ENCODE measurements at regions of chr17 and their contacts with region 1.

Region 1: GRCh38 chr17:57902800-57903759 is 52.1 kb downstream of the CUEDC1 start:
- DNase-seq: peak; percentile 48 to 95 (median 75)

Region 2: DNA sequence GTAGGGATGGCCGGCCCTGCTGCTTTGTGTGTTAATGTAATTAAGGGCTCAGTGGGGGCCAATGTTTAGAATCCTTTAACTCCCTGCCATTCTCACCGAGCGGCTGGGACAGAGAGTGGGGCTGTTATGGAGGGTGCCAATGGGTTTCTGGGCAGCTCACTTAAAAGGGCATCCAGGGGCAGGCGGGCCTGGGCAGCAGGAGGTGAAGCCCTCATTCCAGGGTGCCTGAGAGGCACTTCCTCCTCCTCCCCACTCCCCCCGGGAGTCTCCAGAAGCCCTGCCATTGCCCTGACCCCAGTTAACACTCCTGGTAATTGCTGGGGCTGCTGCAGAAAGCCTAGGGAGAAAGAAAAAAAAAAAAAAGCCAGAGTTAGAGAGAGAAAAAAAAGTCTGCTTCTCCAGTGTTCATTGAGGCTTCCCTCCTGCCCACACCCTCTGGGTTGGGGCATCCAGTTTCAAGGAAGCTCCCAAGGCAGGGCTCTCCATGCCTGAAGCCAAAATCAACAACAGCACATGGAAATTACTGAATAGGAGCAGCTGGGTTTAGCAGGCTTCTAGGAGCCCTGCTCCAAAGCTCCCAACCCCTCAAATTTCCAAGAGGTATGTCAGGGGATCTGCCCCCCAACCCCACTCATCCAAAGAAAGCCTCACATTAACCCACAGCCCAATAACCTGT is 24.1 kb after region 1 on chr17:
- intact Hi-C with region 1: no loop called
- DNase-seq: peak in 4 of 10 donors; percentile 52 to 95 (median 72)

Region 3: GRCh38 chr17:57995076-57995956 is 92.2 kb after region 1 on chr17:
- intact Hi-C with region 1: loop called (anchors 5 kb)
- DNase-seq: peak in 6 of 10 donors; percentile 47 to 89 (median 52)